Activated CD8-positive, alpha-beta memory T cell treated with anti-CD3 and anti-CD28 coated beads, Interleukin-2, amount 10 ng/mL, durations not matched to agents 7 days and 5 days (primary cell): ENCODE measurements at regions of chr16 and their contacts with region 1.

Region 1: GRCh38 chr16:3173892-3174617 is 13.9 kb upstream of the OR1F1 start:
- DNase-seq: peak; percentile 58
- ATAC-seq: peak; percentile 13
- H3K4me3 Mint-ChIP-seq: peak overlapping the region; percentile 61
- H3K27ac Mint-ChIP-seq: no peak overlapping the region
- H3K4me1 Mint-ChIP-seq: peaks cover 38% of the 10 kb centered on the region
- H3K27me3 Mint-ChIP-seq: peaks cover 86% of the 10 kb centered on the region

Region 2: GRCh38 chr16:3017794-3018506 is 156.1 kb before region 1 on chr16 and contains the start of gene CLDN6:
- CTCF ChIA-PET with region 1: no interaction called
- DNase-seq: no peak
- ATAC-seq: no peak
- H3K4me3 Mint-ChIP-seq: no peak within 1 kb of the TSS
- H3K27ac Mint-ChIP-seq: no peak within 1 kb of the TSS
- H3K4me1 Mint-ChIP-seq: peaks cover 27% of the 10 kb centered on the region
- H3K27me3 Mint-ChIP-seq: peaks cover 26% of the 10 kb centered on the region
- total RNA-seq, gene CLDN6: not detected

Region 3: GRCh38 chr16:3029537-3030402 is 144.3 kb before region 1 on chr16:
- CTCF ChIA-PET with region 1: interaction called, 17 read pairs
- DNase-seq: peak; percentile 81
- ATAC-seq: peak; percentile 66
- H3K4me3 Mint-ChIP-seq: peak overlapping the region; percentile 65
- H3K27ac Mint-ChIP-seq: peak overlapping the region; percentile 62
- H3K4me1 Mint-ChIP-seq: peaks cover 44% of the 10 kb centered on the region
- H3K27me3 Mint-ChIP-seq: peaks cover 51% of the 10 kb centered on the region

Region 4: DNA sequence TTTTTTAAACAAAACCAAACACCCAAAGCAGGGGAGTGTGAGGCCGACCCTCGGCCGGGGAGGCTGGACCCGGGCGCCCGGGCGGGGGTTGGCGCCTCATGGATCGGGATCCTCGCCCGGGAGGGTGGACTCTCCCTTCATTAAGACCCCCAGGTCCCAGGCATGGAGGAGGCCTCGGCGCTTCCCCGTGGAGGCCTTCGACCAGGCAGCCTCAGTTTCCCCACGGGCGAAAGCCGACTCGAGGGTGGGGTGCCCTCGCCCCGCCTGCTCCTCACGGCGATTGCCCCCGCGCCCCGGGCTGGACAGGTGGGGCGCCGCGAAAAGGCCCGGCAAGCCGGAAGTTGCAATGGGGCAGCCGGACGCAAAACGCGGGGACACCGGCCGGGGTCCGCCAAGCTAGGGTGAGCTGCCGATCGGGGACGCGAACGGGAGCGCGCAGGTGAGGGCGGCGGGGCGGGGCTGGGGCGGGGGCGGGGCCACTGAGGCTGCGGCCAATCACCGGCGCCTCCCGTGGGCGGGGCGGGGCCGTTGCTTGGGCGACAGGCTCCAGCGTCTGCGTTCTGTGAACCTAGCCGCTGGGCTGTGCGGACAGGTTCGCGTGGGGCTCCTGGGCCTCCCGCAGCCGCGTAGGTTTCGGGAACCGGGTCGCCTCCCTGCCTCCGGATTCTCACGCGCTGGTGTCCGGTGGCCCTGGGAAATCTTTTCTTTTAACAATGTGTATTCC is 67.7 kb before region 1 on chr16:
- CTCF ChIA-PET with region 1: no interaction called
- DNase-seq: peak; percentile 97
- ATAC-seq: peak; percentile 95
- H3K4me3 Mint-ChIP-seq: peak overlapping the region; percentile 70
- H3K27ac Mint-ChIP-seq: peak overlapping the region; percentile 91
- H3K4me1 Mint-ChIP-seq: peaks cover 18% of the 10 kb centered on the region
- H3K27me3 Mint-ChIP-seq: peaks cover 3% of the 10 kb centered on the region

Region 5: DNA sequence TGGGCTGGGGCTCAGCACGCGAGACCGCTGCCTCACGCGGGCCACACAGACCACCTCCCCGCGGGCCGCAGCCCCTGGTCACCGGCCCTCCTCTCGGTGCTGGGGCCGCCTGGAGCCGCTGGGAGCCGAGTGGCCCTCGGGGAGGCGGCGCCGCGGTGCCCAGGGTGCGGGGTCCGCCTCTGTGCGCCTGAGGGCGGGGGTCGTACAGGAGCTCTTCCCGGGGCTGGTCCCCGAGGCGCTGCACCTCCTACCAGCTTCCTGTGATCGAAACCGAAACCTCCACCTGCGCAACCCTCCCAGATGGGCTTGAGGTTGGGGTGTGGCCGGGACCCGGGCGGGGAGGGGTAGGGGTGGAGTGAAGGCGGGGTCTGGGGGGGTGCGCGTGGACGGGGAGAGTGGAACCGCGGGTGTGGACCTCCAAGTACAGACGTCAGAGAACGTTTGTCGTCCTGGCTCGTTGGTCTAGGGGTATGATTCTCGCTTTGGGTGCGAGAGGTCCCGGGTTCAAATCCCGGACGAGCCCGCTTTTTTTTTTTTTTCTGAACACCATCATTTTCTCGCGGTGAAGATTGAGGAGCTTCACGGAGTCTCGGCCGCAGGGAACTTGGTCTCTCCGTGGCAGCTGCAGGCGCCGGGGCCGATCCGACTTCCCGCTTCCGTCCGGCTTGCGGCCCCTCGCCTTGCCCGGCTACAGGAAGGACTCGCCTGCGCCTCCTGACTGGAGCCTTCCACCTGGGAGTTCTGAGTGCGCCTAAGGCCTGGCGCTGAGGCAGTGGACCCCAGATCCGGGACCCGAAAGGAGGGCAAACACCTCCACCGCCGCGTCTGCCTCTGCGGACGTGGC is 15.4 kb before region 1 on chr16:
- CTCF ChIA-PET with region 1: interaction called, 18 read pairs
- DNase-seq: peak; percentile 96
- ATAC-seq: peak; percentile 88
- H3K4me3 Mint-ChIP-seq: peak overlapping the region; percentile 83
- H3K27ac Mint-ChIP-seq: peak overlapping the region; percentile 92
- H3K4me1 Mint-ChIP-seq: peaks cover 43% of the 10 kb centered on the region
- H3K27me3 Mint-ChIP-seq: peaks cover 25% of the 10 kb centered on the region